Dorsolateral prefrontal cortex (tissue), 120 donors: ENCODE measurements at regions of chr7 and their contacts with region 1.

Region 1: GRCh38 chr7:22452142-22452959 is 47.6 kb downstream of the STEAP1B start:
- DNase-seq: peak in 9 of 10 donors; percentile 64 to 83 (median 74)
- H3K4me3 ChIP-seq: peak overlapping the region in 58 of 59 donors; percentile 16 to 70 (median 47)
- H3K27ac ChIP-seq: peak overlapping the region in 56 of 59 donors; percentile 13 to 88 (median 72)
- H3K27me3 ChIP-seq: no peaks in the 10 kb centered on the region
- CTCF ChIP-seq: peak; percentile 28 to 84 (median 71)

Region 2: DNA sequence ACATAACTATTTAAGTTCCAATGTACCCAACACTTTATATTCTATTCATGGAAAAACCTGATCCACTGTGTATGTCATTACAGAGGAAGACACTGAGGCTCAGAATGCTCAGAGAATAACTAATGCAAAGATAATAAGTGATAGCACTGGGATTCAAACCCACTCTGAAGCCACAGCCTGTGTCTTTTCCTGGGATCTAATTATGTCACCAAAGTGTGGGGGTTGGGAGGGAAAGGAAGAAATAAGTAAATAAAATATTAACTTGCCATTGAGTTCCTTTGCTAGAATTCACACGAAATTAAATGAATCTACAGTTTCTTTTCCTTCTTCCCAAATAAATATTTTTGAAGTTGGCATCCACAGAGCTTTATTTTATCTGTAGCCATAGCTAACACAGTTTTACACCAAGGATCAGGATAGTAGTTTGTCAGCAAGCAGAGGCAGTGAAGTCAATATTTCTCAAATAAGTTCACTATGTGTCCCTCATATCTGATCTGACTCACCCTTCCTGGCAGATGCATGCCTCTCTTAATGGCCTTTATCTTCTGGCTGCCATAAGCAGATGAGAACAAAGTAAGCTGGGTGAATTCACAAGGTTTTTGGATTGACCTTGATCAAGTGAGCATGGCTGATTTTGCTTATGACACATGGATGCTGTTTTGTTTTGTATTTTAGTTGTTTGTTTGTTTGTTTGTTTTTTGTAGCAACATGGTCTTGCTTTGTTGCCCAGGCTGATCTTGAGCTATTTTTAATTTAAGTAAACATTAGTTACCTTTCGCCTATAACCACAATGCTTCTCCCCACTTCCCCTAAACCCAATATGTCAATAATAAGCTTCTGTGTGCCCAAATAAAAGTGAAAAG is 101.7 kb before region 1 on chr7:
- intact Hi-C with region 1: loop called (anchors 5 to 10 kb)
- DNase-seq: no peak
- H3K4me3 ChIP-seq: peak overlapping the region in 1 of 59 donors; percentile 6
- H3K27ac ChIP-seq: peak overlapping the region in 53 of 59 donors; percentile 11 to 90 (median 59)
- H3K27me3 ChIP-seq: no peaks in the 10 kb centered on the region
- CTCF ChIP-seq: no peak

Region 3: GRCh38 chr7:22356701-22357353 is 95.5 kb before region 1 on chr7 and contains the start of gene RAPGEF5:
- intact Hi-C with region 1: loop called (anchors 5 to 10 kb)
- DNase-seq: peak in 2 of 10 donors; percentile 58 to 61
- H3K4me3 ChIP-seq: peak within 1 kb of the TSS; percentile 16 to 76 (median 60)
- H3K27ac ChIP-seq: peak within 1 kb of the TSS in 54 of 59 donors; percentile 10 to 88 (median 74)
- H3K27me3 ChIP-seq: peaks cover 0 to 5% (median 0%) of the 10 kb centered on the region in 45 donors
- CTCF ChIP-seq: peak in 6 of 56 donors; percentile 8 to 40 (median 12)
- total RNA-seq, gene RAPGEF5: 181 to 405 (median 243) TPM

Region 4: DNA sequence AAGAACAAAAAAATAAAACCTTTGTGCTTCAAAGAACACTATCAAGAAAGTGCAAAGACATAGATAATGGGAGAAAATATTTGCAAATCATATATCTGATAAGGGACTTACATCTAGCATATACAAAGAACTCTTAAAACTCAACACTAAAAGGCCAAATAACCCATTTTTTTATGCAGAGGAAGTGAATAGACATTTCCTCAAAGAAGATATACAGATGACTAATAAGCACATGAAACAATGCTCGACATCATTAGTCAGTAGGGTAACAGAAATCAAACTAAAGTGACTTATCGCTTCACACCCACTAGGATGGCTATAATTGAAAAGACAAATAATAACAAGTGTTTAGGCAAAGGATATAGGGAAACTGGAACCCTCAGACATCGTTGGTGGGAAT is 924.8 kb after region 1 on chr7:
- intact Hi-C with region 1: no loop called
- DNase-seq: no peak
- H3K4me3 ChIP-seq: no peak overlapping the region
- H3K27ac ChIP-seq: no peak overlapping the region
- H3K27me3 ChIP-seq: peaks cover 0 to 7% (median 0%) of the 10 kb centered on the region in 45 donors
- CTCF ChIP-seq: no peak